Right ventricle myocardium superior (tissue), 1 donor: ENCODE measurements at regions of chr10 and their contacts with region 1.

Region 1: GRCh38 chr10:17607603-17608332 is 9.4 kb downstream of the HACD1 start:
- DNase-seq: no peak
- ATAC-seq: peak; percentile 83

Region 2: DNA sequence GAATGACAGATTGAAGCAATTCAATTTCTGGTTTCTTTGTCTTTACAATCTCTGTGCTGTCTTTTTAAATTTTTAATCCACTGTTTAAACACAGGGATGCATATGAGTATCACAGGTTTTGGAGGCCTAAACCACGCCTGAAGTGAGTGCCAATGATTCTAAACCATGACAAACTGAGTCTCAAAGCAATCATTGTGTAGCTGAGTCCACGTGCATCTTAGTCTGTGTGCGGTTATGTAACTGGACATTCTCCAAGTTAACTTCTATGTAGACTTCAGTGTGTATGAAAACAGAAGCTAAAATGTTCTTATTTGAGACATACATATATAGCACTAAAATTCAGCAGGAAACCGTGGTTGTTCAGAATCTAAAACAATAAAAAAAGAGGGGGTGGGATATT is 74.0 kb before region 1 on chr10:
- intact Hi-C with region 1: no loop called
- DNase-seq: no peak
- ATAC-seq: no peak

Region 3: DNA sequence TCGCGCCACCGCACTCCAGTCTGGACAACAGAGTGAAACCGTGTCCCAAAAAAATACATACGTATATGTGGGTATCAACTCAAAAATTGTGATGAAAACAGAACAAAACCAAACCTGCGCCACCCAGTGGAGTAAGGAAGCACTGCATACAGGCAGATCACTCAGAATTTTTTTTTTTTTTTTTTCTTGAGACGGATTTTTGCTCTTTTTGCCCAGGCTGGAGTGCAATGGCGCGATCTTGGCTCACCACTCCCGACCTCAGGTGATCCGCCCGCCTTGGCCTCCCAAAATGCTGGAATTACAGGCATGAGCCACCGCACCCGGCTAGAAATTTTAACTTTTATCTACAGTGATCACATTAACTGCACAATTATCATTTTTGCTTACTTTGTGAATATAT is 135.2 kb after region 1 on chr10:
- intact Hi-C with region 1: loop called (anchors 2 kb)
- DNase-seq: peak; percentile 67
- ATAC-seq: peak; percentile 40

Region 4: DNA sequence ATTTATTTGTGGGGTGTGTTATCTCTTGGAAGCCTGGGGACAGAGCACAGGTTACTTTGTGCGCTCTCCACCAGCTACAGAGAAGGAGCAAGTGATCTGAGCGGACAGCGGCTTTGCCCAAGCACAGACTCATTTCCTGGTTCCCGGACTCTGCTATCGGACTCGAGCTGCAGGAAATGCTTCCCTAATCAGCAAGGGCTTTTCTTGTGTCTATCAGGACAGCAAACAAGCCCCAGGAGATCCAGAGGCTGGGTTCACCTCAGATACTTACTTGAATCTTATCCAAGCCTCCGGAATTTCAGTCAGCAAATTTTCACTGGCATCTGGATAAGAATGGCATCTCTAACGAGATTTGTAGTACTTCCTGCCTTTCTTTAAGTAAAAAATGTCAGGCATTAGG is 229.2 kb after region 1 on chr10:
- intact Hi-C with region 1: loop called (anchors 5 kb)
- DNase-seq: no peak
- ATAC-seq: peak; percentile 80